Right cardiac atrium (tissue), 5 donors: ENCODE measurements at regions of chr3 and their contacts with region 1.

Region 1: DNA sequence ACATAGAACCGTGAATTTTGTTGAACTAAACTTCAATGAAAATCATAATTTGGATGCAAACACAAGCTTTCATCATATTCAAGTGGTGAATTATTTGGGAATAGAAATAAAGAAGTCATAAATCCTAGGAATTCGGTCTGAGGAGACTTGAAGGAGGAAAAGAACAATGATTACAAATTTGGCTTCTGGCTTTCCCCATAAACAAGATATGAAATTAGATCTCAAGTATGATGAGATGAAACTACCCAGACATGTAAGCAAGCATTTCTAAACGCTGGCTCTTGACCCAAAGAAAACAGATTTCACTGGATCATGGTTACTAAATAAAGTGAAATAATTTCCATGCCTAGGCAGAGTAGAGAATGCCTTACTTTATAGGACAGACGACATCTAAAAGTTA is 146.9 kb upstream of the LRTM1 start:
- DNase-seq: no peak
- ATAC-seq: no peak
- H3K4me3 ChIP-seq: no peak overlapping the region
- H3K27ac ChIP-seq: no peak overlapping the region
- H3K4me1 ChIP-seq: no peaks in the 10 kb centered on the region
- H3K27me3 ChIP-seq: no peaks in the 10 kb centered on the region

Region 2: GRCh38 chr3:54853573-54854404 is 221.0 kb before region 1 on chr3:
- intact Hi-C with region 1: no loop called
- DNase-seq: peak; percentile 84 to 93 (median 89)
- ATAC-seq: peak; percentile 91 to 93
- H3K4me3 ChIP-seq: no peak overlapping the region
- H3K27ac ChIP-seq: no peak overlapping the region
- H3K4me1 ChIP-seq: no peaks in the 10 kb centered on the region
- H3K27me3 ChIP-seq: no peaks in the 10 kb centered on the region

Region 3: GRCh38 chr3:54968546-54969172 is 106.1 kb before region 1 on chr3:
- intact Hi-C with region 1: no loop called
- DNase-seq: no peak
- ATAC-seq: no peak
- H3K4me3 ChIP-seq: no peak overlapping the region
- H3K27ac ChIP-seq: no peak overlapping the region
- H3K4me1 ChIP-seq: no peaks in the 10 kb centered on the region
- H3K27me3 ChIP-seq: no peaks in the 10 kb centered on the region

Region 4: GRCh38 chr3:54983271-54984099 is 91.3 kb before region 1 on chr3:
- intact Hi-C with region 1: no loop called
- DNase-seq: no peak
- ATAC-seq: no peak
- H3K4me3 ChIP-seq: no peak overlapping the region
- H3K27ac ChIP-seq: no peak overlapping the region
- H3K4me1 ChIP-seq: peaks cover 4% of the 10 kb centered on the region
- H3K27me3 ChIP-seq: no peaks in the 10 kb centered on the region

Region 5: DNA sequence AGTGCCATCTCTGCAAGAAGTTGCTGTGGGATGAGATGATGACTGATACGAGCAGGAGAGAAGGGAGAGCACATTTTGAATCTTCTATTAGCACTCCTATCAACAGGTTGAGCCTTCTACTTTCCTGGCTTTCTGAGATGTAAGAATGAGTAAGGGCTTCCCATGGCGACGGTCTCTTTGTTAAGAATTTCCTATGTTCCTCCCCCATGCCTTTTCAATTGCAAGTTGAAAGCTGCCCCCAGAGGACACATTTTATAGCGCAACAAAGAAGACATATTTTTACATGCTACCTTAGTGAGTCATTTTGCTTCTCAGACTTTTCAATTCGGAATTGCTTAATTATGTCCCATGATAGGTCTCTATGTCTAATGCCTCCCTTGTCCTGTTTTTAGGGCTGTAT is 75.6 kb before region 1 on chr3:
- intact Hi-C with region 1: loop called in 1 of 4 experiments (anchors 10 kb)
- DNase-seq: no peak
- ATAC-seq: peak in 1 of 2 donors; percentile 16
- H3K4me3 ChIP-seq: no peak overlapping the region
- H3K27ac ChIP-seq: no peak overlapping the region
- H3K4me1 ChIP-seq: no peaks in the 10 kb centered on the region
- H3K27me3 ChIP-seq: no peaks in the 10 kb centered on the region

Region 6: DNA sequence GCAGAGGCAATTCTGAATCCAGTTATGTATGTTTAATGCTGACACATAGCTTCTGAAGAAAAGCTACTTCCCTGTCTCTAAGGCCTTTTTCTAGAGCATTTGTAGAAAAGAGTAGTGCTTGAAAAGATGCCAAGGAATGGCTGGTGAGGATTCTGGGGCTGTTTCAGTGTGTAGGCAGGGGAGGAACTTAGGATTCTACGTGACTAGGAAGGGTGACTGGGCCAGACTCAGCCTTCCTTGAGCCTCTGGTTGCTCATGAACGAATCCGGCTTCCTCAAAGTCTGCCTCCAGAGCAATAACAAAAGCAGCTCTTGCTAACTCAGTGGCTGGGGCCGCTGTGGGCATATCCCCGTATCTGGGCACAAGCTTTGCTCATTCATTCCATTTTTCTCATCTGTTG is 517.1 kb after region 1 on chr3:
- intact Hi-C with region 1: no loop called
- DNase-seq: peak in 2 of 3 donors; percentile 21 to 54
- ATAC-seq: peak; percentile 43 to 62
- H3K4me3 ChIP-seq: no peak overlapping the region
- H3K27ac ChIP-seq: no peak overlapping the region
- H3K4me1 ChIP-seq: no peaks in the 10 kb centered on the region
- H3K27me3 ChIP-seq: no peaks in the 10 kb centered on the region